Vagina (tissue), 2 donors: ENCODE measurements at regions of chr12 and their contacts with region 1.

Region 1: GRCh38 chr12:132614861-132615578 is 3.6 kb upstream of the P2RX2 start:
- DNase-seq: no peak
- H3K4me3 ChIP-seq: no peak overlapping the region
- H3K27ac ChIP-seq: no peak overlapping the region
- H3K4me1 ChIP-seq: peaks cover 17% of the 10 kb centered on the region
- H3K27me3 ChIP-seq: peaks cover 5% of the 10 kb centered on the region
- CTCF ChIP-seq: peak; percentile 78 to 93 (median 88)
- POLR2A ChIP-seq: no peak

Region 2: GRCh38 chr12:132153501-132154340 is 461.3 kb before region 1 on chr12:
- intact Hi-C with region 1: loop called (anchors 10 kb)
- DNase-seq: no peak
- H3K4me3 ChIP-seq: peak overlapping the region in 1 of 2 donors; percentile 18
- H3K27ac ChIP-seq: no peak overlapping the region
- H3K4me1 ChIP-seq: peaks cover 6% of the 10 kb centered on the region
- H3K27me3 ChIP-seq: no peaks in the 10 kb centered on the region
- CTCF ChIP-seq: peak; percentile 82 to 92 (median 82)
- POLR2A ChIP-seq: no peak

Region 3: GRCh38 chr12:132414634-132415326 is 200.2 kb before region 1 on chr12:
- intact Hi-C with region 1: loop called (anchors 5 kb)
- DNase-seq: no peak
- H3K4me3 ChIP-seq: no peak overlapping the region
- H3K27ac ChIP-seq: no peak overlapping the region
- H3K4me1 ChIP-seq: peaks cover 9% of the 10 kb centered on the region
- H3K27me3 ChIP-seq: no peaks in the 10 kb centered on the region
- CTCF ChIP-seq: peak; percentile 68 to 82 (median 72)
- POLR2A ChIP-seq: no peak

Region 4: GRCh38 chr12:132507656-132508490 is 107.1 kb before region 1 on chr12:
- intact Hi-C with region 1: no loop called
- DNase-seq: no peak
- H3K4me3 ChIP-seq: no peak overlapping the region
- H3K27ac ChIP-seq: peak overlapping the region; percentile 13
- H3K4me1 ChIP-seq: peaks cover 62% of the 10 kb centered on the region
- H3K27me3 ChIP-seq: no peaks in the 10 kb centered on the region
- CTCF ChIP-seq: no peak
- POLR2A ChIP-seq: no peak

Region 5: GRCh38 chr12:132687208-132688164 is 72.5 kb after region 1 on chr12 and contains the starts of genes POLE and PXMP2:
- intact Hi-C with region 1: no loop called
- DNase-seq: peak in 1 of 2 donors; percentile 89
- H3K4me3 ChIP-seq: peak within 1 kb of the TSS; percentile 70 to 92
- H3K27ac ChIP-seq: peak within 1 kb of the TSS; percentile 66
- H3K4me1 ChIP-seq: peaks cover 23% of the 10 kb centered on the region
- H3K27me3 ChIP-seq: no peaks in the 10 kb centered on the region
- CTCF ChIP-seq: no peak
- POLR2A ChIP-seq: no peak
- total RNA-seq, gene POLE: 56.7 TPM
- total RNA-seq, gene PXMP2: 15.0 TPM